ENCODE measurements at regions of chr11 and their contacts with region 1.

Region 1: GRCh38 chr11:122678406-122678805 is 22.9 kb downstream of the UBASH3B start:
- DNase-seq: no peak
- H3K4me3 ChIP-seq: no peak overlapping the region
- H3K27ac ChIP-seq: no peak overlapping the region
- H3K4me1 ChIP-seq: no peaks in the 10 kb centered on the region
- H3K27me3 ChIP-seq: no peaks in the 10 kb centered on the region
- CTCF ChIP-seq: no peak

Region 2: DNA sequence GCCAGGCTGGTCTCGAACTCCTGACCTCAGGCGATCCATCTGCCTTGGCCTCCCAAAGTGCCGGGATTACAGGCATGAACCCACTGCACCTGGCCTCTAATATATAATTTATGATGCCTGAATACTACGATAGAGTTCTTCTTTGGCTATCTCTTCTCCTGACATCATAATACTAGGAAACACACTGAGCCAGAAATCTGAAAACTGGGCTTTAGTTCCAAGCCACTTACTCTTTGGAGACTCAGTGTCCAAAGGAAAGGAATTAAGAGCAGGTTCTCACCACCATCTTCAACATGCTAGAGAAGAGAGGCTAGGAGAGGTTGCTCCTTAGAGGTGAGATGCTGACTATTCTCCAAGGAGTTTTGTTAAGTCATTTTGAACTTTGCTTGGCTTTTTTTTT is 29.5 kb after region 1 on chr11:
- intact Hi-C with region 1: loop called (anchors 1 kb)
- DNase-seq: no peak
- H3K4me3 ChIP-seq: no peak overlapping the region
- H3K27ac ChIP-seq: no peak overlapping the region
- H3K4me1 ChIP-seq: no peaks in the 10 kb centered on the region
- H3K27me3 ChIP-seq: no peaks in the 10 kb centered on the region
- CTCF ChIP-seq: no peak

Measured in tibial artery (tissue), 4 donors.